K562 (cell line): ENCODE measurements at regions of chr9 and their contacts with region 1.

Region 1: DNA sequence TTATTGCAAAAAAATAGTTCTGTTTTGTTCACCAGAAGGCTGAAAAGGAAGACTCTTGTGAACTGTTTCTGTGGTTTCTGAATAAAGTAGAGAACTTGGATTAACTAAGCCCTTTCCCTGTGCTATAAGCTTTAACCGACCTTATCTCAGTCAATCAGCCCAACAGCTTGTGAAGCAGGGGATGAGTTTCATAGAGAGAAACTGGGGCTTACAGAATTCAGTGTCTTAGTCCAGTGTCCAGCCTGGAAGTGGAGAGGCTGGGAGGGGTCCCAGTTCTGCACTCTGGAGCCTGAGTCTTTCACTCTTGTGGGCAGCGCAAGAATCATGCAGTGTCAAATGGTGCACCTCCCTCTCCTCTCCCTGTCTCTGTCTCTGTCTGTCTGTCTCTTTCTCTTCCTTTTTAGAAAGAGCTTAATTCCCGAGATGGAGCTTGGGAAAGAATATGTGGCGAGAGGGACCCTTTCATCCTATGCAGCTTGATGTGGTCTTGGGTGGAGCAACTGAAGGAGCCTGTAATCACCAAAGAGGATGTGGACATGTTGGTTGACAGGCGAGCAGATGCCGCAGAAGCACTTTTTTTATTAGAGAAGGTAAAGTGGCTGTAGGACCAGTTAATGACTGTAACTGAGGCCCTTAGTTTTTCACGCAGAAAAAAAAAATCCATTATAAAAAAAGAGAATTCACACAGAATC is 17.0 kb downstream of the PTPDC1 start:
- DNase-seq: peak in 1 of 4 experiments; percentile 49
- ATAC-seq: peak; percentile 74
- H3K4me3 ChIP-seq: no peak overlapping the region
- H3K27ac ChIP-seq: no peak overlapping the region
- H3K4me1 ChIP-seq: peaks cover 0 to 15% of the 10 kb centered on the region in 2 experiments; a peak in 4 of 5 replicates
- H3K27me3 ChIP-seq: no peaks in the 10 kb centered on the region
- CTCF ChIP-seq: no peak
- EP300 ChIP-seq: no peak
- POLR2A ChIP-seq: no peak
- RAD21 ChIP-seq: no peak

Region 2: DNA sequence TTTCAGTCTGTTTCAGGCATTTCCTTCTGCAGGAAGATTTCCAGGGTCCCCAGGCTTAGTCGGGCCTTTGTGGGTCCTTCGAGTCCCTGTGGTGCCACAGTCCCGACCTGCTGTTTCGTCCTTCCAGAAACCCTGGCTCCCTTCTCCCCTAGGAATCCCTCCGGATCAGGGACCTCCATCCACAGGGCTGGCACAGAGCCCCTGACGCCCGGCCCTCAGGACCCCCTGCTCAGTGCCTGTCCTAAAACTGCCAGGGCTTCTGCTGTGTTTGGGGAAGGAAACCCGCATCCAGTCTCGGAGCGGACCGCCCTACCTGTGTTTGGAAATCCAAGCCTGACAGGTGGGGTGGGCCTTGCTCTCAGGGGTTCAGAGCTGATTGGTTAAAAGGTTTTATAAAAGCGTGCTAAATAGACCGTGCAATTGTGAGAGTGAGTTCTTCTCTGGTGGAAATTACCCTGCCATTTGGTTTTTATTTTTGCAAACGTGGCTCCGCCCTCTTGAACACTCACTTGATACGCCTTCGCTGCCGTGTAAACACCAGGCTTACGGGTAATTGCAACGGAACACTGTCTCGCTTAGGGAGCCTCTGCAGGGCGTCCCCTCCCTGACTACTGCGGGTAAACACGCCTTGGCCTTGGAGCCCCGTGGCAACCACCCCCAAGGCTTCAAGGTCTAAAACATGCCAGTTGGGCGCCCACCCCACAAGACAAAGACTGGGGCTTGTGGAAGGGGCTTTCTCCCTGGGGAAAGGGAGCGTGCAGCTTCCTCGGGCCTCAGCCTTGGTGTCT is 403.8 kb before region 1 on chr9:
- CTCF ChIA-PET with region 1: no interaction called
- POLR2A ChIA-PET with region 1: no interaction called
- in situ Hi-C with region 1: no loop called
- intact Hi-C with region 1: no loop called
- DNase-seq: peak in 1 of 4 experiments; percentile 6
- ATAC-seq: peak; percentile 77
- H3K4me3 ChIP-seq: no peak overlapping the region
- H3K27ac ChIP-seq: no peak overlapping the region
- H3K4me1 ChIP-seq: peaks cover 0 to 6% of the 10 kb centered on the region in 2 experiments; a peak in 1 of 5 replicates
- H3K27me3 ChIP-seq: peaks cover 18 to 31% of the 10 kb centered on the region in 2 experiments; a peak in 4 of 5 replicates
- CTCF ChIP-seq: no peak
- EP300 ChIP-seq: no peak
- POLR2A ChIP-seq: no peak
- RAD21 ChIP-seq: no peak

Region 3: GRCh38 chr9:94084314-94084713 is 17.0 kb before region 1 on chr9 and contains the start of gene PTPDC1:
- CTCF ChIA-PET with region 1: no interaction called
- POLR2A ChIA-PET with region 1: interaction called, 11 read pairs
- in situ Hi-C with region 1: no loop called
- intact Hi-C with region 1: no loop called
- DNase-seq: peak; percentile 19 to 60 (median 42)
- ATAC-seq: peak; percentile 85
- H3K4me3 ChIP-seq: no peak within 1 kb of the TSS
- H3K27ac ChIP-seq: peak within 1 kb of the TSS; percentile 3; the same call in 2 of the 3 replicates
- H3K4me1 ChIP-seq: peaks cover 8 to 20% of the 10 kb centered on the region in 2 experiments; a peak in 4 of 5 replicates
- H3K27me3 ChIP-seq: no peaks in the 10 kb centered on the region
- CTCF ChIP-seq: no peak
- EP300 ChIP-seq: no peak
- POLR2A ChIP-seq: no peak
- RAD21 ChIP-seq: no peak
- polyA plus RNA-seq, gene PTPDC1: 1.1 to 1.9 TPM